ENCODE measurements at regions of chrX and their contacts with region 1.

Region 1: GRCh38 chrX:102708900-102709299 is 3.3 kb upstream of the GPRASP2 start:
- DNase-seq: no peak
- ATAC-seq: no peak
- H3K4me3 ChIP-seq: no peak overlapping the region
- H3K27ac ChIP-seq: no peak overlapping the region
- H3K4me1 ChIP-seq: no peaks in the 10 kb centered on the region
- H3K27me3 ChIP-seq: no peaks in the 10 kb centered on the region
- CTCF ChIP-seq: no peak
- POLR2A ChIP-seq: no peak
- RAD21 ChIP-seq: no peak

Region 2: DNA sequence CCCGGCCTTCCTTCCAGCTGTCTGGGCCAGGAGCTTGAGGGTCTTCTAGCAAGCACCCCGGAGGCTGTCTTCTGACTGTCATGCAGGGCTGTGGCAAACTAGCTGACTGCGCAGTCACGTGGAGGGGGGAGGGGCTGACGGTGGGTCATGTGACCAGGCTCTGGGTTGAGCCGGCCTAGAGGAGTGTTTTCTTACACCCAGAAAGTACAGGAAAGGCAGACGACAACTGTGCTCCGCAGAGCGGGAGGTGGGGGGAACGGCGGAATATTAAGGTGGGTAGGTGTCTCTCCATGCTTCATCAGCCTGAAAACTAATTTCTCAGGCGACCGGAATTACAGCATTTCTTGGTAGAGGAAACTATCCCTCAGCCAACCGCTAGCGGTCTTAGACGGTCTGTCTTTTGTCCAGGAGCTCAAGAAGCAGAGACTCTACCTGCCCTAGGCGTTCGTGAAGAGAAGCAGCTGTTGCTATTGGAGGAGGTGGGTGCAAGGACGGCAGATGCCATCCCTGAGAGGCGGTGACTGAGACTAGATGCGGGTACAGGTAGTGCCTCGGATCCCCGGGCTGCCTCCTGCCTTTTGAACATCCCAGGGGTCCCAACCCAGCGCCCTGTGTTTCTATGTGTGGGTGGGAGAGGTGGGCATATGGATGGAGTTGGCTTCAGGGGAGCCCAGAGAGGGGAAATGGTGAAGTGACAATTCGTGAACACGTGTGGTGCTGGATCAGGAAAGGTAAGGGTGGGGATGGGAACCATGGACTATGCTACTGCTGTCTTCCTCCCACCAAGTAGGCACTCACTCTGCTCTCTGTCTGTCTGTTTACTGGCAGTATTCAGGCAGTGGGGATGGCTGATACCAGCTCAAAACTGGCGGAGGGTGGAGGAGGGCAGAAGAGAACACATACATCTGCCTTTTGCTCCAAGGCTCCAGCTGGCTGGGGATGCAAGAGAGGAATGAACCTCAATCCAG is 48.8 kb before region 1 on chrX:
- CTCF ChIA-PET with region 1: no interaction called
- POLR2A ChIA-PET with region 1: no interaction called
- RAD21 ChIA-PET with region 1: no interaction called
- intact Hi-C with region 1: loop called (anchors 5 kb)
- DNase-seq: no peak
- ATAC-seq: no peak
- H3K4me3 ChIP-seq: no peak overlapping the region
- H3K27ac ChIP-seq: no peak overlapping the region
- H3K4me1 ChIP-seq: no peaks in the 10 kb centered on the region
- H3K27me3 ChIP-seq: no peaks in the 10 kb centered on the region
- CTCF ChIP-seq: no peak
- POLR2A ChIP-seq: no peak
- RAD21 ChIP-seq: no peak

Region 3: GRCh38 chrX:103220511-103221323 is 511.8 kb after region 1 on chrX:
- CTCF ChIA-PET with region 1: no interaction called
- POLR2A ChIA-PET with region 1: no interaction called
- RAD21 ChIA-PET with region 1: no interaction called
- intact Hi-C with region 1: no loop called
- DNase-seq: no peak
- ATAC-seq: no peak
- H3K4me3 ChIP-seq: no peak overlapping the region
- H3K27ac ChIP-seq: no peak overlapping the region
- H3K4me1 ChIP-seq: no peaks in the 10 kb centered on the region
- H3K27me3 ChIP-seq: no peaks in the 10 kb centered on the region
- CTCF ChIP-seq: no peak
- POLR2A ChIP-seq: no peak
- RAD21 ChIP-seq: no peak